HCT116 (cell line): ENCODE measurements at regions of chr6 and their contacts with region 1.

Region 1: DNA sequence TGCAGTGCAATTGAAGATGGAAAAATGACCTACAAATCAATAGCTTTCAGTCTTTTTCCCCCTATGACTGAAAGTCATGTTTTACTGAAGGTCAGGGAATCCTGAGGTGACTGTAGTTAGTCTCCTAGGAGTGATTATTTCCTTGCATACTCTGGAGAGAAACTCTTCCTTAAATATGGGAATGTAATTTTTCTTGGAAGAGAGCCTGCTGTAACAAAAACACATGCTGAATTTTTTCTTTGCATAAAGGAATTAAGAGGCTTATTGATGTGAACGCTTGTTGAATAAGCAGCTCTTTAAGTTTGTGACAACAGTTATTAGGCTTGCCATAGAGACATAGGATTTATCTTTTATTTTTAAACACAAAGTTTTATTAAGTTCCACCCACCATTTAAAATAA is 64.5 kb downstream of the ELOVL2 start:
- DNase-seq: no peak
- ATAC-seq: no peak
- H3K4me3 ChIP-seq: no peak overlapping the region
- H3K27ac ChIP-seq: no peak overlapping the region
- H3K4me1 ChIP-seq: no peaks in the 10 kb centered on the region
- H3K27me3 ChIP-seq: no peaks in the 10 kb centered on the region
- CTCF ChIP-seq: no peak
- POLR2A ChIP-seq: no peak
- RAD21 ChIP-seq: no peak

Region 2: GRCh38 chr6:10809098-10809497 is 170.5 kb before region 1 on chr6:
- CTCF ChIA-PET with region 1: no interaction called
- POLR2A ChIA-PET with region 1: no interaction called
- RAD21 ChIA-PET with region 1: no interaction called
- intact Hi-C with region 1: no loop called
- DNase-seq: no peak
- ATAC-seq: no peak
- H3K4me3 ChIP-seq: no peak overlapping the region
- H3K27ac ChIP-seq: no peak overlapping the region
- H3K4me1 ChIP-seq: no peaks in the 10 kb centered on the region
- H3K27me3 ChIP-seq: no peaks in the 10 kb centered on the region
- CTCF ChIP-seq: no peak
- POLR2A ChIP-seq: no peak
- RAD21 ChIP-seq: no peak

Region 3: DNA sequence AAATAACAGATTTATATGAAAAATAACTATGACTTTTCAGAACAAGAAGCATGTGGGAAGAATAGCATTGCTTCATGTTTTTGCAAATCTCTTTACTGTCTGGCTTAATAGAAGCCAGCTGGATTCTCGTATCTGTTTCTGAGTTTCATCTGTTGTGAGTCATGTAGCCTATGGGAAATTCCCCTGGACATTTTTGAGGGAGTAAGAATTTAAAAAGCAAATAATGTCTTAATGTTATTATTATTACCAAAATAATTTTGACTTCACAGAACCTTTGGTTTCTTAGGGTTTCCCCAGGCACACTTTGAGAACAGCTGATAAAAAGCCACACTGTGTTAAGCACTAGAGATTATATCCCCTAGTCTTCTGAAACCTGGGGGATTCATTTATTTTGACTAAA is 16.9 kb before region 1 on chr6:
- CTCF ChIA-PET with region 1: no interaction called
- POLR2A ChIA-PET with region 1: no interaction called
- RAD21 ChIA-PET with region 1: no interaction called
- intact Hi-C with region 1: no loop called
- DNase-seq: no peak
- ATAC-seq: no peak
- H3K4me3 ChIP-seq: no peak overlapping the region
- H3K27ac ChIP-seq: no peak overlapping the region
- H3K4me1 ChIP-seq: no peaks in the 10 kb centered on the region
- H3K27me3 ChIP-seq: no peaks in the 10 kb centered on the region
- CTCF ChIP-seq: no peak
- POLR2A ChIP-seq: no peak
- RAD21 ChIP-seq: no peak

Region 4: GRCh38 chr6:11263291-11263775 is 283.7 kb after region 1 on chr6:
- CTCF ChIA-PET with region 1: no interaction called
- POLR2A ChIA-PET with region 1: no interaction called
- RAD21 ChIA-PET with region 1: no interaction called
- intact Hi-C with region 1: loop called (anchors 10 kb)
- DNase-seq: no peak
- ATAC-seq: no peak
- H3K4me3 ChIP-seq: no peak overlapping the region
- H3K27ac ChIP-seq: no peak overlapping the region
- H3K4me1 ChIP-seq: no peaks in the 10 kb centered on the region
- H3K27me3 ChIP-seq: no peaks in the 10 kb centered on the region
- CTCF ChIP-seq: no peak
- POLR2A ChIP-seq: no peak
- RAD21 ChIP-seq: no peak